ENCODE measurements at regions of chr11 and their contacts with region 1.

Region 1: DNA sequence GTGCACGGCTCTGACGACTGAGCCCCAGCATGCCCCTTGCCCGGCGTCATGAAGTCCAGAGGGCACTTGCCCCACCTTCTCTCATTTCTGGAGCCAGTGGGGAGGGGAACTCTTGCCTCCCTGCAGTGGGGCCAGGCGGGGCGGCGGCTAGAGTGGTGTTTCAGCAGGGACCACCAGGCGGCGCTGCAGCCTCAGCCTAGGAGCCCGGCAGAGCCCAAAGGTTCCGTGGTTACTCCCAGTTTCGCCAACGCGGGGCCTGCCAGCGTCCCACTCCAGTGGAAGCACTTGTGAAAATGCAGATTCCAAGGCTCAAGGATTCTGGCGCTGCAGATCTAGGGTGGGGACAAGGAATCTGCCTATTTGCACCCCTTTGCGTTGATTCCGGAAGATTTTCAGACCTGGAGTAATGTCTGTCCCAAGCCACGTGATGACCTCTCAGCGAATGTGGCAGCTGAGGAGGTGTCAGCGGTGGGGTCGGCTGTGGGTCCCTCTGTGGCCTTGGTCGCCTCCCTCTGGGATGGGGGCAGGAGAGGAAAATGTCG is 55.7 kb downstream of the CD82 start:
- DNase-seq: peak; percentile 74 to 77
- H3K4me3 ChIP-seq: no peak overlapping the region
- H3K27ac ChIP-seq: no peak overlapping the region
- H3K4me1 ChIP-seq: peaks cover 0 to 30% of the 10 kb centered on the region in 2 donors
- H3K27me3 ChIP-seq: no peaks in the 10 kb centered on the region
- CTCF ChIP-seq: peak; percentile 87 to 99 (median 96)
- POLR2A ChIP-seq: no peak

Region 2: GRCh38 chr11:44727373-44728287 is 106.4 kb after region 1 on chr11:
- intact Hi-C with region 1: loop called (anchors 10 kb)
- DNase-seq: peak; percentile 76
- H3K4me3 ChIP-seq: peak overlapping the region; percentile 28 to 85 (median 40)
- H3K27ac ChIP-seq: peak overlapping the region in 2 of 3 donors; percentile 65 to 81
- H3K4me1 ChIP-seq: peaks cover 16 to 43% of the 10 kb centered on the region in 2 donors
- H3K27me3 ChIP-seq: no peaks in the 10 kb centered on the region
- CTCF ChIP-seq: peak; percentile 64 to 95 (median 84)
- POLR2A ChIP-seq: no peak

Region 3: GRCh38 chr11:44893846-44894617 is 272.8 kb after region 1 on chr11:
- intact Hi-C with region 1: loop called (anchors 5 kb)
- DNase-seq: peak; percentile 63 to 65
- H3K4me3 ChIP-seq: no peak overlapping the region
- H3K27ac ChIP-seq: no peak overlapping the region
- H3K4me1 ChIP-seq: peaks cover 0 to 12% of the 10 kb centered on the region in 2 donors
- H3K27me3 ChIP-seq: no peaks in the 10 kb centered on the region
- CTCF ChIP-seq: peak; percentile 70 to 87 (median 80)
- POLR2A ChIP-seq: no peak

Region 4: GRCh38 chr11:44911029-44911814 is 290.0 kb after region 1 on chr11:
- intact Hi-C with region 1: loop called (anchors 2 kb)
- DNase-seq: peak; percentile 83 to 88
- H3K4me3 ChIP-seq: no peak overlapping the region
- H3K27ac ChIP-seq: no peak overlapping the region
- H3K4me1 ChIP-seq: peaks cover 0 to 13% of the 10 kb centered on the region in 2 donors
- H3K27me3 ChIP-seq: no peaks in the 10 kb centered on the region
- CTCF ChIP-seq: peak; percentile 60 to 95 (median 77)
- POLR2A ChIP-seq: no peak